Panc1 (cell line): ENCODE measurements at regions of chr1 and their contacts with region 1.

Region 1: GRCh38 chr1:63794354-63794753 is 20.5 kb downstream of the ROR1 start:
- DNase-seq: no peak
- ATAC-seq: peak; percentile 50
- H3K4me3 ChIP-seq: no peak overlapping the region
- H3K27ac ChIP-seq: peak overlapping the region; percentile 70
- H3K4me1 ChIP-seq: peaks cover 45% of the 10 kb centered on the region
- H3K27me3 ChIP-seq: no peaks in the 10 kb centered on the region
- CTCF ChIP-seq: no peak

Region 2: DNA sequence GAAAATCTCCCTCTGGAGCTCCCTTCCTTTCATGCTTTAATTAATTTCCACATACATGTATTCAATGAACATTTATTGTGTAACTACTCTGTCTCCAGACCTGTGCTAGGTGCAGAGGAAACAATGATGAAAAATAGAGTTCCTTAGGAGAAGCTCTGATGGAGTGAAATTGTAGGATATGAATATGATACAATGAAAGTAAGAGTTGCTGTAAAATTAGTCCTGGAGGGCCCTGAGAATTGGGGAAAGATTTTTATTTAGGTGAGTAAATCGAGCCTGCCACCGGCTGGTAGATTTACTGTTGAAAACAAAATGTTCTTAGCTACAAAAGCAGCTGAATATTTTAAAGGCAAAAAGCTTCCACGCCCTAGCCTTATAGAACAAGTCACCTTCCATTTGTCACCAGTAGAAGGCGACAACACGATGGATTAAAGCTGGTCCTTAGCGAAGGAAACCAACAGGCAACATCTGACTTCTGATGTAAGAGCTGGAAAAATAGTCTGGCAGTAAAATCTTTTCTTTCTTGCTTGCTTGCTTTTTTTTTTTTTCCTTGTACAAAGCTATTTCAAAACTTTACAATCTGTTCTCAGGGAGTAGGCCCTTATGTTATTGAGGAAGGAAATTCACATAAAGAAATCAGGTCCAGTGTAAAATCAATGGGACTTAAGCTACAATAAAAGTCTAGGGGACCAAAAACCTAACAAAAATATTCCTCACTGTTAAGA is 102.5 kb before region 1 on chr1:
- CTCF ChIA-PET with region 1: interaction called, 3 read pairs
- POLR2A ChIA-PET with region 1: interaction called, 13 read pairs
- in situ Hi-C with region 1: no loop called
- intact Hi-C with region 1: no loop called
- DNase-seq: peak; percentile 92
- ATAC-seq: peak; percentile 95
- H3K4me3 ChIP-seq: no peak overlapping the region
- H3K27ac ChIP-seq: peak overlapping the region; percentile 93
- H3K4me1 ChIP-seq: peaks cover 14% of the 10 kb centered on the region
- H3K27me3 ChIP-seq: no peaks in the 10 kb centered on the region
- CTCF ChIP-seq: peak; percentile 87